ENCODE measurements at regions of chrX and their contacts with region 1.

Region 1: DNA sequence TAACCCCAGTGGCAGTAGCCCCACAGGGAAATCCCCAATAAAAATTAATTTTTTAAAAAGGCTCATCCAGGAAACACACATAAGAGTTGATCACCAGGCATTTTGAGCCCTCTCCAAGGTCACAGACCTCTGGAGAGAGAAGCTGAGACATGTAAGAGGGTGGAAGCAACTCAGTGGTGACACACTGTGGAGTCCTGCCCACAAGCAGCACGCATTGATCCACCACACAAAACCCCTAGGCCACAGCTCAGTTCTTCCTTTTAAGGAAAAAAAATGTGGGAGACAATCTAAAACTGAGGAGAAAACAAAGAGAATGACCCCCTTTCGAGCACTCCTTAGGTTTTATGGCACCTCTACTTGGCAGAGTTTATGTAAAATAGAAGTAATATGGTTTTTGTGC is 71.7 kb upstream of the S100G start:
- DNase-seq: peak; percentile 73
- ATAC-seq: peak; percentile 54; the same call in 1 of the 2 replicates
- H3K4me3 ChIP-seq: no peak overlapping the region
- H3K27ac ChIP-seq: no peak overlapping the region
- H3K4me1 ChIP-seq: no peaks in the 10 kb centered on the region
- H3K27me3 ChIP-seq: no peaks in the 10 kb centered on the region
- CTCF ChIP-seq: no peak
- POLR2A ChIP-seq: no peak
- RAD21 ChIP-seq: no peak; the same call in 1 of the 2 replicates

Region 2: DNA sequence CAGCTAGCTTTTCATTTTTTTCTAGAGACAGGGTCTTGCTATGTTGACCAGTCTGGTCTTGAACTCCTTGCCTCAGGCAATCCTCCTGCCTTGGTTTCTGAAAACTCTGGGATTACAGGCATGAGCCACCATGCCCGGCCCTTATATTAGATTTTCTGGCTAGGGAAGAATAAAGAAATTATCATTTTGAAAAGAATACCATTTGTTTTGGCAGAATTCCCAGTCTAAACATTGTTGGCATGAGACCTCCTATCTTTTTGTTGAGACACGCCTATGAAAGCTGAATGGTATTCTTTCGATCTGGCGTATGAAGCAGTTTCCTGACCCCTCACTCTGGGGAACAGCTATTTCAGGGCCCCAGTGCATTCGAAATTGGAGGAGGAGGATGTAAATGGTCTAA is 475.3 kb after region 1 on chrX:
- CTCF ChIA-PET with region 1: no interaction called
- POLR2A ChIA-PET with region 1: no interaction called
- dilution Hi-C with region 1: no loop called
- in situ Hi-C with region 1: no loop called
- intact Hi-C with region 1: loop called (anchors 5 kb)
- DNase-seq: no peak
- ATAC-seq: no peak
- H3K4me3 ChIP-seq: no peak overlapping the region
- H3K27ac ChIP-seq: no peak overlapping the region
- H3K4me1 ChIP-seq: no peaks in the 10 kb centered on the region
- H3K27me3 ChIP-seq: peaks cover 9% of the 10 kb centered on the region
- CTCF ChIP-seq: no peak
- POLR2A ChIP-seq: no peak
- RAD21 ChIP-seq: no peak